ENCODE measurements at regions of chr7 and their contacts with region 1.

Region 1: DNA sequence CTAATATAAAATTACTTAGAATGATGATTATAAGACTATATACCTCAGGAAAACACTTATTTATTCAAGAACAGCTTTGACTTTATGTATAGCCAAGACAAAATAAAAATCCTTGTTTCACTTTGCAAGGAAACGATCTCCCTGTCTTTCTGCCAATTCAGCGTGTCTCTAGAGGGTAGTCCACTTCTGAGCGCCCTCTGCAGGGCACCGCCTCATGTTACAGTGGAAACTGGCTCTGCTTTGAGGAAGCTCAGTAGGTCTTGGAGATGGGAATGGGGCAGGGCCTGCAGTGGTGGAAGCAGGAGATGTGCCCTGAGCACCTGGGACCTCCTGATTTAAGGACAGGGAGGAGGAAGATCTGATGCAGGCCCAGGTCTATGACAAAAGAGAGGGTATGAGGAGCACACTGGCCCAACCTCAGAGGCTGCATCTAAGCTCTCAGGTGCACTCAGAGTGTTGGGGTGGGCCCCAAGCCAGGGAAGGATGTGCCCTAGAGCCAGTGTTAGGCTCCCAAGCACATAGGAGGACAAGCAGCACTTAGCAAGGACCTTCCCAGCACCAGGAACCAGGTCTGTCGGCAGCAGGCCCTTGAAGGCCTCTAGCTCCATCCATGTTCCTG is 481.0 kb downstream of the TNS3 start:
- DNase-seq: peak; percentile 34 to 64 (median 42)
- ATAC-seq: peak; percentile 92
- H3K4me3 ChIP-seq: no peak overlapping the region
- H3K27ac ChIP-seq: no peak overlapping the region
- H3K4me1 ChIP-seq: no peaks in the 10 kb centered on the region
- H3K27me3 ChIP-seq: no peaks in the 10 kb centered on the region; a peak in 1 of 5 replicates
- CTCF ChIP-seq: peak; percentile 62 to 73 (median 64)
- EP300 ChIP-seq: no peak
- POLR2A ChIP-seq: no peak
- RAD21 ChIP-seq: peak in 1 of 2 experiments; percentile 43; a peak in 1 of 4 replicates

Region 2: DNA sequence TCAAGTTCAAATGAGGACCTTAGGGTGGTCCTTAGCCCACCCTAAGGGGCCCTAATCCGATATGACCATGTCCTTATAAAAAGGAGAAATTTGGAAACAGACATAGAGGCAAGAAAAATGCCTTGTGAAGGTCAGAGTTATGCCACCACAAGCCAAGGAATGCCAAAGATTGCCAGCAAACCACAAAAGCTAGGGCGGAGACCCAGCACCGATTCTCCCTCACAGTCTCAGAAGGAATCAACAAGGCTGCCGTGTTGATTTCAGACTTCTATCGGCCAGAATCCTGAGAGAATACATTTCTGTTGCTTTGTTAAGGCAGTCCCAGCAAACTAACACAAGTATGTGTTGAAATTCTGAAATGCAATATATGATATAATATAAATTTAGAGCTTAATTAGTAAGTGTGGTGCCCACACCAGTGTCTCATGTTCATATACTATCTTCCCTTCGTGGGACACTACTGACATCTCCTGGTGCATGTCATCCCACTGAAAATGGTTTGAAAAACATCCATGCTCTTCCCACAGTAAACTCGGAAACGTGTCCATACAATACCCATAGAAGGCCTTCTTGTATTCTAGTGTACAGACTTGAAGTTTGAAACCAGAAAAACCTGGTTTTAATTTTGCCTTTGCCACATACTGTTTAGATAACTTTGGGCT is 132.0 kb after region 1 on chr7:
- CTCF ChIA-PET with region 1: no interaction called
- POLR2A ChIA-PET with region 1: no interaction called
- in situ Hi-C with region 1: no loop called
- intact Hi-C with region 1: loop called (anchors 2 kb)
- DNase-seq: peak in 2 of 4 experiments; percentile 35 to 50
- ATAC-seq: peak; percentile 60; the same call in 2 of the 3 replicates
- H3K4me3 ChIP-seq: no peak overlapping the region
- H3K27ac ChIP-seq: no peak overlapping the region
- H3K4me1 ChIP-seq: peaks cover 7% of the 10 kb centered on the region in 2 experiments; a peak in 4 of 5 replicates
- H3K27me3 ChIP-seq: no peaks in the 10 kb centered on the region
- CTCF ChIP-seq: peak; percentile 34 to 75 (median 64)
- EP300 ChIP-seq: no peak
- POLR2A ChIP-seq: no peak
- RAD21 ChIP-seq: peak; percentile 85 to 87

Region 3: DNA sequence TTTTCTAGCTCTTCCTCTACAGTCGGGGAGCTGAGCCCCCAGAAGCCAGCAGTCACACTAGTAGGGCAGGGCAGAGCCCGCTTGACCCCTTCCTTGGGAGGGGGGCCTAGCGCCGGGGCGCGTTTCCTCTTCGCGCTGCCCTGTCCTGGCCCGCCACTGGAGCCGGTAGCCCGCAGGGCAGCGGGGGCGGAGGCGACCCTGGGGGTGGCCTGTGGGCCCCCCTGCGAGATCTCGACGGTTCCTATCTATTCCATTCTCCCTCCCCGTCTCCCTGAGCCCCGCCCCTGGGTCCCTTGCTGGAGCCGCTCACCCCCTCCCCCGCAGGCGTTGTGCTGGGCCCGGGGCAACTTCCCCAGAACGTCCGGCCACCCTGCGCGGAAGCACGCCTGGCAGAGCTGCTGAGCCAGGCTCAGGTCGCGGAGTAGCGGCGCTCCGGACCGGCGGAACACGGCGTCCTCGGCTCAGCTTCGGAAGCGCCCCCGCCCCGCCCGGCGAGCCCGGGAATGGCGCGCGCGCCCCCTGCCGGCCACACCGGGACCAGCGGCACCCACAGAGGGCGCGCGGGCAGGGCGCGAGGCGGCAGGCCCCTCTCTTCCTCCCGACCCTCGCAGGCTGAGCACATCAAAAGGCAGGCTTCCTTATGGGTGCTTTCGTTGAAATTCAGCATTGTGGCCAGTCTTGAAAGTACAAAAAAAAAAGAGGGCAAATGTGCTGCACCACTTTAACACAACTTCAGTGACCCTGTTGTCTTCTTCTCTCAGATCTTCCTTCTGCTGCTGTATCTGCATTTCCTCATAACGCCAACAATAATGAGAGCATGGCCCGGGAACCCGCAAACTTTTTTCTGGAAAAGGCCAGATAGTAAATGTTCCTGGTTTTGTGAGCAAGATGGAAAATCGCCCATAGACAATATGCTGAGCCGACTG is 153.4 kb after region 1 on chr7:
- CTCF ChIA-PET with region 1: interaction called, 3 read pairs
- POLR2A ChIA-PET with region 1: no interaction called
- in situ Hi-C with region 1: no loop called
- intact Hi-C with region 1: loop called (anchors 5 kb)
- DNase-seq: peak; percentile 69 to 91 (median 88)
- ATAC-seq: peak; percentile 98
- H3K4me3 ChIP-seq: peak overlapping the region; percentile 57
- H3K27ac ChIP-seq: no peak overlapping the region
- H3K4me1 ChIP-seq: peaks cover 7 to 10% of the 10 kb centered on the region in 2 experiments; a peak in 3 of 5 replicates
- H3K27me3 ChIP-seq: peaks cover 0 to 12% of the 10 kb centered on the region in 2 experiments; a peak in 3 of 5 replicates
- CTCF ChIP-seq: peak; percentile 67 to 94 (median 73)
- EP300 ChIP-seq: no peak
- POLR2A ChIP-seq: no peak
- RAD21 ChIP-seq: peak; percentile 79 to 86

Measured in K562 (cell line).